WTC11 (cell line): ENCODE measurements at regions of chr15 and their contacts with region 1.

Region 1: GRCh38 chr15:77821188-77821958 is 188.7 kb upstream of the LINGO1 start:
- DNase-seq: peak; percentile 82
- ATAC-seq: peak; percentile 72
- H3K4me3 Mint-ChIP-seq: peak overlapping the region; percentile 52; the same call in 1 of the 2 replicates
- H3K27ac Mint-ChIP-seq: no peak overlapping the region
- H3K4me1 Mint-ChIP-seq: peaks cover 29% of the 10 kb centered on the region
- H3K27me3 Mint-ChIP-seq: peaks cover 46% of the 10 kb centered on the region
- CTCF ChIP-seq: peak; percentile 42; the same call in 1 of the 2 replicates

Region 2: DNA sequence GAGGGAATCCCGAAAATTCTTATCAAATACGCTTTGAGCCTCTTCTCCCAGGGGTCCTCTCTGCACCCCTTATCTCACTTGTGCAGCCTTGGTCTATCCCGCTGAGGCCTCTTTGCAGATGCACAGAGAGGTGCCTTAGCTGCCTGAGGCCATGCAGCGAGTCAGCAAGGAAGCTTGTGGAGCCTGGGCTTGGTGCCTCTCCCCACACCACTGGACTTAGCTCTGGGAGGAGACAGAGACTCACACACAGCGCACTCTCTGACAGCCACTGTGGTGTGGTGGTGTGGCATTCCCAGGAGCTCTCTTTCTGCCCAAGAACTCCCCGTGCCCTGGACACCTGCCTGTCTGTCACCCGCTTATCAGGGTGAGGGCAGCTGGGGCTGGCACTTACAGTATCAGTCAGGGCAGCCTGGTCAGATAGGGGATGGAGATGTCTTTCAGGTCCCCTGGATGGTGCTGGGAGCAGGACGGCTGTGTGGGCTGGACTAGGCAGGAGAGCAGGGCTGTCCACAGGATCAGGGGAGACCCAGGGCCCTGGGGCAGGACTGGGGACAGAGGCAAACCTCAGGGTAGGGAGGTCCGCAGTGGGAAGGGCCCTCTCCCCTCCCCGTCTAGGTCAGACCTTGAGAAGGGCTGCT is 178.5 kb before region 1 on chr15:
- CTCF ChIA-PET with region 1: interaction called, 54 read pairs
- POLR2A ChIA-PET with region 1: no interaction called
- DNase-seq: no peak
- ATAC-seq: peak; percentile 14
- H3K4me3 Mint-ChIP-seq: no peak overlapping the region
- H3K27ac Mint-ChIP-seq: no peak overlapping the region
- H3K4me1 Mint-ChIP-seq: peaks cover 13% of the 10 kb centered on the region
- H3K27me3 Mint-ChIP-seq: no peaks in the 10 kb centered on the region
- CTCF ChIP-seq: no peak

Region 3: DNA sequence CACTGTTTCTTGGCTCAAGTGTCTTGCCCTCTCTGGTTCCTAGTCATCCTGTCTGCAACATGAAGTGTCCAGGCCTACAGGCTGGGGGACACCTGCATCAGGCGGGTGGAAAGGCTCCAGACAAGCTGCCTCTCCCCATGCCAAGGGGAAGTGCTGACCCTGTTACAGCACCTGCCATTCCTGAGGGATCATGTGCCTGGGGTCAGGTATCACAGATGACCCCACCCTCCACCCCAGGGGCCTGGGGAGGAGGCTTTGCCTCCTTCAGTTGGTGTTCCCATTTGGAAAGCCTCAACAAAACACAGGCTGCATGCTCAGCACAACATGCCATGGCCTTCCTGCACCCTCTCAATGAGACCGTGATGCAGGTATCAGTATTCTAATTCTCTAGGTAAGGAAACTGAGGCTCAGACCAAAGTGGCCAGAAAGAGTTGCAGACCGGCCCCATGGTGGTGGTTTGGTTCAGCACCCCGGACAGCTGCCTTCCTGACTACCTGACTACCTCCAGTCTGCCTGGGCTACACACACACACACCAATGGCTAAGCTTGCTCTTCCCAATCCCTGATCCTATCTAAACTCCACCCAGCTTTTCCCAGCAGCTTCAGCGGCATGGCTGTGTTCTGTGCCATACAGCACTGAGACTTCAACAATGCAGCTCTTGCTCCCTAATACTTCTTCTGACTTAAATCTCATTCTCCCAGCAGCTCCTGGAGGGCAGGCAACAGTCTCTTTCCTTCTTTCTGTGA is 119.0 kb before region 1 on chr15:
- CTCF ChIA-PET with region 1: interaction called, 21 read pairs
- POLR2A ChIA-PET with region 1: no interaction called
- DNase-seq: peak; percentile 80
- ATAC-seq: peak; percentile 97
- H3K4me3 Mint-ChIP-seq: no peak overlapping the region
- H3K27ac Mint-ChIP-seq: no peak overlapping the region
- H3K4me1 Mint-ChIP-seq: peaks cover 5% of the 10 kb centered on the region
- H3K27me3 Mint-ChIP-seq: no peaks in the 10 kb centered on the region; the same call in 1 of the 2 replicates
- CTCF ChIP-seq: no peak

Region 4: GRCh38 chr15:77747175-77748077 is 73.9 kb before region 1 on chr15:
- CTCF ChIA-PET with region 1: interaction called, 25 read pairs
- POLR2A ChIA-PET with region 1: no interaction called
- DNase-seq: no peak
- ATAC-seq: no peak
- H3K4me3 Mint-ChIP-seq: no peak overlapping the region
- H3K27ac Mint-ChIP-seq: no peak overlapping the region
- H3K4me1 Mint-ChIP-seq: peaks cover 21% of the 10 kb centered on the region
- H3K27me3 Mint-ChIP-seq: peaks cover 47% of the 10 kb centered on the region
- CTCF ChIP-seq: no peak

Region 5: DNA sequence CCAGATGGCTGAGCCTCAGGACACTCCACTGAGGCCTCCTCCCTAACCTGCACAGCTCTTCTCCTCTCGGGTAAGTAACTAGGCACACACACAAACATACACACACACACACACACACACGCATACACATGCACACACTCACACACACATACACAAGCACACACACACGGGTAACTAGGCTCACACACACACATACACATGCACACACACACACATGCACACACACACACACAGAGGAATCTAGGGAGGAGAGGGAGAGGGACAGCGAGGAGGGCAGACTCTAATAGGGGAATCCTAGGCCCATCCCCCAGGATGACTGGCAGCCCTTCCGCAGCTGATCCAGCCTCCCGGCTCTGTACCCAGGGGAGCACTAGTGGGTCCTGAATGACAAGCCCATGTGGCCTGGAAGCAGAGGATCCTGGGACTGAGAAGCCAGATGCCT is 11.2 kb before region 1 on chr15:
- CTCF ChIA-PET with region 1: interaction called, 13 read pairs
- POLR2A ChIA-PET with region 1: no interaction called
- DNase-seq: no peak
- ATAC-seq: peak; percentile 14; the same call in 1 of the 2 replicates
- H3K4me3 Mint-ChIP-seq: no peak overlapping the region
- H3K27ac Mint-ChIP-seq: peak overlapping the region; percentile 82
- H3K4me1 Mint-ChIP-seq: peaks cover 29% of the 10 kb centered on the region
- H3K27me3 Mint-ChIP-seq: no peaks in the 10 kb centered on the region
- CTCF ChIP-seq: no peak